ENCODE measurements at regions of chr11 and their contacts with region 1.

Region 1: DNA sequence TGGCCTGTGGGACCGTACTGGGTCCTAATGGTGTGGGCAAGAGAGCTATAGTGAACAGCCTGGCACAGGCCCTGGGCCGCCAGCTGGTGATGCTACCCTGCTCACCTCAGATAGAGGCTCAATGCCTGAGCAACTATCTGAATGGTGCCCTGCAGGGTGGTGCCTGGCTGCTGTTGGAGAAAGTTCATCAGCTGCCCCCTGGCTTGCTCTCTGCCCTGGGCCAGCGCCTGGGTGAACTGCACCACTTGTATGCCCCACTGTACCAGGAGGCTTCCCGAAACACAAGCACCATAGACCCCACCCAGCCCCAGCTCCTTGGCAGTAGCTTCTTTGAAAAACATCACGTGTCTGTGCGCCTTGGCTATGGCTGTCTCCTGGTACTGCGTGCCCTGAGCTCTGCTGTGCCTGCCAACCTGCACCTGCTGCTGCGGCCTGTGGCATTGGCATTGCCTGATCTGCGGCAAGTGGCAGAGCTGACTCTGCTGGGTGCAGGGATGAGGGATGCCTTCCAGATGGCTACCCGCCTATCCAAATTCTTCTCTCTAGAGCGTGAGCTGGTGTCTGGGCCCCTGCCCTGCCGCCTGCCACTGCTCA is 49.0 kb downstream of the DNHD1 start:
- DNase-seq: peak; percentile 79 to 87
- ATAC-seq: peak; percentile 87 to 95
- H3K4me3 ChIP-seq: no peak overlapping the region
- H3K27ac ChIP-seq: peak overlapping the region; percentile 78 to 87 (median 81)
- H3K4me1 ChIP-seq: peaks cover 9 to 18% of the 10 kb centered on the region in 2 donors
- H3K27me3 ChIP-seq: no peaks in the 10 kb centered on the region
- CTCF ChIP-seq: no peak
- POLR2A ChIP-seq: no peak

Region 2: DNA sequence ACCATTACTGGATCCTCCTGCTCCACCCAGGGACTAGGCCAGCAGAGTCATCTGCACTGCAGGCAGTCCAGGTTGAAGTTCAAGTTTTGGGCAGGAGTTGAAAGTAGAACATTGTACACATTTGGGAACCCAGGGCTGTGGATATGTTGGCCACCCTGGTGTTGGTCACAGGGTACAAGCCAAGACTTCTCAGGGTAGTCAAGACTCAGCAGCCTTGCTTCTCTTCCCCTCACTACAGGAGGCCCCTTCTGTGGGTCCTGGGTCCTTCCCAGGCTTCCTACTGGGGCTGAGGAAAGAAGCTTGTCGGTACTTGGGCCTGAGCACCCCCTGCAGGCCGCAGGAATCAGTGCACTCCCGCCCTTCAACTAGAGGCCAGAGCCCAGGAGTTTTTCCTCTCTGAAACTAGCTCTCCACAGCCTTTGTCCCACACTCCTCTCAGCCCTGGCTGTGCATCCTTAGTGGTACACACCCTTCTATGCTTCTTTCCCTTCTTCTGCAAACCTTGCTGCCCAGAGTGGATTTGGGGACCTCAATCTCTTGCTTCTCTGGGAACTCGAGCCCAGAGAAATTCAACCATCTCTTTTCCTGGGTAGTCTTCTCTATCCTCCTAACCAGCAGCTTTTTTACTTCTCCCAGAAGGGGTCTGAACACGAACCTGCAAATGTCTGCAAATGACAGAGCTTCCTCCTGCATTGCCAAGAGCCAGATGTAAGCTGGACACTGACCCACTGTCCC is 102.6 kb before region 1 on chr11:
- in situ Hi-C with region 1: no loop called
- intact Hi-C with region 1: no loop called
- DNase-seq: peak; percentile 10 to 33
- ATAC-seq: peak; percentile 50 to 88
- H3K4me3 ChIP-seq: no peak overlapping the region
- H3K27ac ChIP-seq: no peak overlapping the region
- H3K4me1 ChIP-seq: no peaks in the 10 kb centered on the region
- H3K27me3 ChIP-seq: no peaks in the 10 kb centered on the region
- CTCF ChIP-seq: peak; percentile 62 to 81 (median 71)
- POLR2A ChIP-seq: no peak

Region 3: DNA sequence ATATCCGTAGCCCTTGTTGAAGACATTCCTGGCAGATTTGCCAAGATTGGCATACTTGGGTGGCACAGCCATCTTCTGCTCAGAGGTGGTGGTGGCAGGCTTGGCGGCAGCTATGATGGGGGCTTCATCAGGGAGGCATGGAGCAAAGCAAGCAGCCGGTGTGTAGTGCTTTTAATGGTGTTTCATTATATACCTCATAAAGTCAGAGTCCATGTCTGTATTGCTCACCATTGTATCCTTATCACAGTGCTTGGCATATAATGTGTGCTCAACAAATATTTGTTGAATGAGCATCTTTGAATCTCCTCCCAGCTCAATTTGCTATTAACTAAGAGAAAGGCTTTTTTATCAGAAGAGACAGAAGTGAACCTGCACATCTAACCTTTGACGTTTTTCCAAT is 56.8 kb before region 1 on chr11:
- in situ Hi-C with region 1: no loop called
- intact Hi-C with region 1: no loop called
- DNase-seq: no peak
- ATAC-seq: no peak
- H3K4me3 ChIP-seq: no peak overlapping the region
- H3K27ac ChIP-seq: no peak overlapping the region
- H3K4me1 ChIP-seq: no peaks in the 10 kb centered on the region
- H3K27me3 ChIP-seq: no peaks in the 10 kb centered on the region
- CTCF ChIP-seq: no peak
- POLR2A ChIP-seq: no peak

Region 4: GRCh38 chr11:6570691-6571427 is 24.8 kb after region 1 on chr11:
- in situ Hi-C with region 1: no loop called
- intact Hi-C with region 1: loop called (anchors 2 kb)
- DNase-seq: peak in 1 of 2 donors; percentile 89
- ATAC-seq: peak in 1 of 2 donors; percentile 69
- H3K4me3 ChIP-seq: peak overlapping the region in 2 of 4 donors; percentile 8 to 35
- H3K27ac ChIP-seq: peak overlapping the region in 3 of 4 donors; percentile 74 to 86 (median 80)
- H3K4me1 ChIP-seq: peaks cover 25 to 28% of the 10 kb centered on the region in 2 donors
- H3K27me3 ChIP-seq: no peaks in the 10 kb centered on the region
- CTCF ChIP-seq: peak in 2 of 5 experiments; percentile 36 to 37
- POLR2A ChIP-seq: peak; percentile 53 to 71